ENCODE measurements at regions of chr3 and their contacts with region 1.

Region 1: DNA sequence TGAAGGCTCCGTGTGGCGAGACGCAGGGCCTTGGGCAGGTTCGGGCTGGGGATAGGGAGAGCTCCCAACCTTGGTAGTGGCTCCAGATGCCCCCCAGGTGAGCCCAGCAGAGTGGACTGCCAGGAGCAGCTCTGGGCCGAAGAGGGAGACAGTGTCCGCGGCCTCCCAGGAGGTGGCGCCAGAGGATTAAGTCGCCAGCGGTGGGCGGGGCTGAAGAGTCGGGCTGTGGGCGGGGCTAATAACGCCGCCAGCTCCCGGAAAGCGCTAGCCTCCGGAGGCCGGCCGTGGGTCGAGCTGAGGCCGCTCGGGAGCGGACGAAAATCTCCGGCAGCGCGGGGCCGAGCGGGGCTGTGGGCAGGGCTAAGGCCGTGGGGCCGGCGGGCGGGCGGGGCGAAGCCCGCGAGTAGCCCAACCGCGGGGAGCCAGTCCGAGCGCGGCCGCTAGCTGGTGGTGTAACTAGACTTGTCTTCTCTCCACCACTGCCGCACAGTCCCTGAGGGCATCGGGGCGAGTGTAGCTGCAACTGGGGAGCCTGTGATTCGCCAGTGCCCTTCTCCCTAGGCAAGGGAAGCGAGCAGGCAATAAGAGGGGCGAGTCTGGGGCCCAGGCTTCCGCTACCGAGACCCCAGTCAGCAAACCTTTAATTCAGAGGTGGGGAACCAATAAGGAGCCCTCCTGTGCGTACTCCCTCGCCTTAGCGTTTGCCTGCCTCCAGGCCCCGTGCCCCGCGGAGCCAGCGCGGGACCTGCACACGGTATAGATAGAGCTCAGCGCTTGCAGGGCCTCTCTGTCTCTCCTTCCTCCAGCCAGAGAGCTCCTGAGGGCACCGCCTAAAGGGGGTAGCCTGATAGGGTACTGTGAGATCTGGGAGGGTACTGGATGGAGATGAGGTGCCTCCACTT is 14.4 kb upstream of the BSN start:
- DNase-seq: peak; percentile 83 to 97 (median 92)
- ATAC-seq: peak; percentile 96
- H3K4me3 ChIP-seq: peak overlapping the region; percentile 65 to 71
- H3K4me3 Mint-ChIP-seq: peak overlapping the region; percentile 82
- H3K27ac ChIP-seq: peak overlapping the region; percentile 46 to 67
- H3K27ac Mint-ChIP-seq: peak overlapping the region; percentile 32
- H3K4me1 ChIP-seq: peaks cover 4% of the 10 kb centered on the region
- H3K4me1 Mint-ChIP-seq: peaks cover 2% of the 10 kb centered on the region
- H3K27me3 ChIP-seq: no peaks in the 10 kb centered on the region
- H3K27me3 Mint-ChIP-seq: peaks cover 10% of the 10 kb centered on the region
- CTCF ChIP-seq: peak; percentile 76

Region 2: DNA sequence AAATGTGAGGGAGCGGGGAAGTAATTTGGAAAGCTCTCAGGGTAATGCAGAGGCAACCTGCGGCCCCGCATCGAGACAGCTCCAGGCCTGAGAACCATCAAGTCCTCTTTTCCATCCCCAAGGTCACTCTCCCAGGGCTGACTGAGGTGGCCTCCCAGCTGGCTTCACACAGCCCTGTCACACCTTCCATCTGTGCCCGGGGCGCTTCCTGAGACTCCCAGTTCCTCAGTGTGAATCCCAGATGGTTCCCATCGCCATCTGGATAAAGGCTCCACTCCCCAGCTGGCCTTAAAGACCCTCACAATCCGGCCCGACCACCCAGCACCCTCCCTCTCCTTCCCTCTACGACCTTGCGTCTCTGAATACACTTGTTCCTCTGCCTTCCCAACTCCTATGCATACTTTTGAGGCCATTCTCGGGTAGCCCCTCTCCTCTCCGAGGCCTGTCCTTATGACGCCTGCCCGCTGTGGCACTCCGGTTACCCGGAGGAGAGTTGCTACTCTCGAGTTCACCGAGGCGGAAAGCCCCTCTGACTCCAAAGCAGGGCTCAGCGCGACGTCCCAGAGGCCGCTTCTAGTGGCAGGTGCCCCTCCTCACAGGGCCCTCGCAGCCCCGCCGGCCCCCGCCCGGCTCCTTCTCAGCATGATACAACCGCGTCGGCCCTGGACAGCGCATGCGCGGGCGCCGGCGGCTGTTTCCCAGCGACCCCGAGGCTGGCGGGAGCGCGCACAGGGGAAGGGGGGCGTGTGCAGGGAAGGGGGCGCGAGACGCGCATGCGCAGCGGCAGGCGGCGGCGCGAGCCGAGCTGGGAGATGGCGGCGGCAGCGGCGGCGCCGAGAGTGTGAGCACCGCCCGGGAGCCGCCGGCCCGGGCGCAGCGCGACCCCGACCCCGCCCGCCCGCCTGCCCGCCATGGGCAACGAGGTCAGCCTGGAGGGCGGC is 14.1 kb after region 1 on chr3 and contains the start of gene BSN:
- CTCF ChIA-PET with region 1: interaction called, 41 read pairs
- POLR2A ChIA-PET with region 1: interaction called, 4 read pairs
- intact Hi-C with region 1: loop called (anchors 1 kb)
- DNase-seq: peak; percentile 72 to 95 (median 93)
- ATAC-seq: peak; percentile 90
- H3K4me3 ChIP-seq: peak within 1 kb of the TSS; percentile 65 to 97
- H3K4me3 Mint-ChIP-seq: peak within 1 kb of the TSS; percentile 89
- H3K27ac ChIP-seq: peak within 1 kb of the TSS in 1 of 2 experiments; percentile 38
- H3K27ac Mint-ChIP-seq: peak within 1 kb of the TSS; percentile 64
- H3K4me1 ChIP-seq: peaks cover 13% of the 10 kb centered on the region
- H3K4me1 Mint-ChIP-seq: peaks cover 17% of the 10 kb centered on the region
- H3K27me3 ChIP-seq: peaks cover 0 to 2% of the 10 kb centered on the region in 2 experiments
- H3K27me3 Mint-ChIP-seq: peaks cover 21% of the 10 kb centered on the region
- CTCF ChIP-seq: no peak
- total RNA-seq, gene BSN: 0.17 to 0.35 TPM

Region 3: GRCh38 chr3:49566312-49566711 is 26.4 kb after region 1 on chr3:
- CTCF ChIA-PET with region 1: interaction called, 10 read pairs
- POLR2A ChIA-PET with region 1: no interaction called
- intact Hi-C with region 1: no loop called
- DNase-seq: no peak
- ATAC-seq: no peak
- H3K4me3 ChIP-seq: no peak overlapping the region
- H3K4me3 Mint-ChIP-seq: no peak overlapping the region
- H3K27ac ChIP-seq: no peak overlapping the region
- H3K27ac Mint-ChIP-seq: no peak overlapping the region
- H3K4me1 ChIP-seq: no peaks in the 10 kb centered on the region
- H3K4me1 Mint-ChIP-seq: no peaks in the 10 kb centered on the region
- H3K27me3 ChIP-seq: no peaks in the 10 kb centered on the region
- H3K27me3 Mint-ChIP-seq: peaks cover 3% of the 10 kb centered on the region
- CTCF ChIP-seq: no peak

Region 4: GRCh38 chr3:49656541-49657112 is 116.7 kb after region 1 on chr3:
- CTCF ChIA-PET with region 1: interaction called, 14 read pairs
- POLR2A ChIA-PET with region 1: interaction called, 3 read pairs
- intact Hi-C with region 1: no loop called
- DNase-seq: no peak
- ATAC-seq: no peak
- H3K4me3 ChIP-seq: no peak overlapping the region
- H3K4me3 Mint-ChIP-seq: no peak overlapping the region
- H3K27ac ChIP-seq: no peak overlapping the region
- H3K27ac Mint-ChIP-seq: no peak overlapping the region
- H3K4me1 ChIP-seq: no peaks in the 10 kb centered on the region
- H3K4me1 Mint-ChIP-seq: no peaks in the 10 kb centered on the region
- H3K27me3 ChIP-seq: no peaks in the 10 kb centered on the region
- H3K27me3 Mint-ChIP-seq: peaks cover 4% of the 10 kb centered on the region
- CTCF ChIP-seq: no peak

Region 5: GRCh38 chr3:49666592-49666991 is 126.7 kb after region 1 on chr3:
- CTCF ChIA-PET with region 1: interaction called, 226 read pairs
- POLR2A ChIA-PET with region 1: interaction called, 20 read pairs
- intact Hi-C with region 1: loop called (anchors 1 kb)
- DNase-seq: no peak
- ATAC-seq: no peak
- H3K4me3 ChIP-seq: no peak overlapping the region
- H3K4me3 Mint-ChIP-seq: no peak overlapping the region
- H3K27ac ChIP-seq: no peak overlapping the region
- H3K27ac Mint-ChIP-seq: no peak overlapping the region
- H3K4me1 ChIP-seq: no peaks in the 10 kb centered on the region
- H3K4me1 Mint-ChIP-seq: no peaks in the 10 kb centered on the region
- H3K27me3 ChIP-seq: peaks cover 0 to 2% of the 10 kb centered on the region in 2 experiments
- H3K27me3 Mint-ChIP-seq: peaks cover 2% of the 10 kb centered on the region
- CTCF ChIP-seq: no peak